Activated CD8-positive, alpha-beta memory T cell treated with anti-CD3 and anti-CD28 coated beads, Interleukin-2, amount 10 ng/mL, durations not matched to agents 7 days and 5 days (primary cell): ENCODE measurements at regions of chr11 and their contacts with region 1.

Region 1: GRCh38 chr11:123235117-123235655 is 40.1 kb upstream of the CLMP start:
- DNase-seq: no peak
- ATAC-seq: no peak
- H3K4me3 Mint-ChIP-seq: no peak overlapping the region
- H3K27ac Mint-ChIP-seq: no peak overlapping the region
- H3K4me1 Mint-ChIP-seq: peaks cover 35% of the 10 kb centered on the region
- H3K27me3 Mint-ChIP-seq: peaks cover 10% of the 10 kb centered on the region

Region 2: DNA sequence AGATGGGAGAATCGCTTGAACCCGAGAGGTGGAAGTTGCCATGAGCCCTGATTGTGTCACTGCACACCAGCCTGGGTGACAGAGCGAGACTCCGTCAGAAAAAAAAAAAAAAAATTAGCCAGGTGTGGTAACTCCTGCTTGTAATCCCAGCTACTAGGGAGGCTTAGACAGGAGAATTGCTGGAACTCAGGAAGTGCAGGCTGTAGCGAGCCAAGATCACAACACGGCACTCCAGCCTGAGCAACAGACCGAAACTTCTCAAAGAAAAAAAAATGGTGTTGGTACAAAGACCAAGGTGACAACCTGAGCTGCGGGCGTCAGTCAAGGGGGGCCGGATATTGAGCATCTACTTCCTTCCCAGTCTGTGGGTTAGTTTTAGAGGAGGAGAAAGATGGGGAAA is 124.8 kb before region 1 on chr11:
- CTCF ChIA-PET with region 1: interaction called, 15 read pairs
- DNase-seq: no peak
- ATAC-seq: no peak
- H3K4me3 Mint-ChIP-seq: no peak overlapping the region
- H3K27ac Mint-ChIP-seq: no peak overlapping the region
- H3K4me1 Mint-ChIP-seq: no peaks in the 10 kb centered on the region
- H3K27me3 Mint-ChIP-seq: peaks cover 11% of the 10 kb centered on the region

Region 3: DNA sequence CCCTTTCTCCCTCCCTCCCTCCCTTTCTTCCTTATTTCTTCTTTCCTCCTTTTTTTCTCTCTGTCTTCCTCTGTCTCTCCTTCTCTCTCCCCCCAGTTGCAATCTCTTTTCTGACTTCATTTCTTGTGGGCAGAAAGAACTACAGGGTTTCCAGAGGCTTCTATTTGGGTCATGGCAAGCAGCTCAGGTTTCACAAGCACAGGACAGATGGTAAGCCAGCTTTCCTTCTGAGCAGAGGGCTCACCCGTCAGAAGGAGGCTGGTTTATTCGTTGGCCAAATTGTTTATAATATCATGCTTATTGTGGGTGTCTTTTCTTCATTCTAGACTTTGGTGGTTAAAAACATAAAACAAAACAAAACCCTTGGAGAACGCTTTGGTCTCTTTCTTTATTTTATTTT is 18.7 kb after region 1 on chr11:
- CTCF ChIA-PET with region 1: no interaction called
- DNase-seq: no peak
- ATAC-seq: no peak
- H3K4me3 Mint-ChIP-seq: no peak overlapping the region
- H3K27ac Mint-ChIP-seq: no peak overlapping the region
- H3K4me1 Mint-ChIP-seq: no peaks in the 10 kb centered on the region
- H3K27me3 Mint-ChIP-seq: peaks cover 53% of the 10 kb centered on the region

Region 4: GRCh38 chr11:123560006-123560405 is 324.8 kb after region 1 on chr11:
- CTCF ChIA-PET with region 1: no interaction called
- DNase-seq: no peak
- ATAC-seq: no peak
- H3K4me3 Mint-ChIP-seq: no peak overlapping the region
- H3K27ac Mint-ChIP-seq: no peak overlapping the region
- H3K4me1 Mint-ChIP-seq: peaks cover 9% of the 10 kb centered on the region
- H3K27me3 Mint-ChIP-seq: no peaks in the 10 kb centered on the region